ENCODE measurements at regions of chr5 and their contacts with region 1.

Region 1: GRCh38 chr5:91787718-91788117 is 404.6 kb upstream of the ARRDC3 start:
- DNase-seq: no peak
- H3K4me3 ChIP-seq: no peak overlapping the region
- H3K27ac ChIP-seq: no peak overlapping the region
- H3K4me1 ChIP-seq: no peaks in the 10 kb centered on the region
- H3K27me3 ChIP-seq: no peaks in the 10 kb centered on the region
- CTCF ChIP-seq: no peak
- EP300 ChIP-seq: no peak
- POLR2A ChIP-seq: no peak

Region 2: DNA sequence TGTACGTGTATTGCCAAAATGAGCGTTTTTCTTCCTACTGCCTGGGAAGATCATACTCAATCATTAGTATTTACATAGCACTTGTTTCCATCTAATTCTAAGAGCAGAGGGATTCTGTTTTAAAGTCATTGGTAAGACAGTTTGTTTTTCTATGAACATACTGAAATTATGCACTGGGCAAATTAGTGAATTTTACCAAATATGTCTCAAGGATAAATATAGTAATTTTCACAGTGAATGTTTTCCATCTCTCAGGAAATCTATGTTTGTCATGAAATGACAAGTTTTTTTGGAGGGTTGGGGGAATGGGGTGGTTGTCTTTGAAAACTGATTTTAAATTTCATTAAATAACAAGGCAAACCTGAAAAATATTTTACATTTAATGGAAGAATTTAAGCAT is 36.7 kb after region 1 on chr5:
- intact Hi-C with region 1: loop called in 1 of 4 experiments (anchors 1 kb)
- DNase-seq: no peak
- H3K4me3 ChIP-seq: no peak overlapping the region
- H3K27ac ChIP-seq: no peak overlapping the region
- H3K4me1 ChIP-seq: no peaks in the 10 kb centered on the region
- H3K27me3 ChIP-seq: no peaks in the 10 kb centered on the region
- CTCF ChIP-seq: no peak
- EP300 ChIP-seq: no peak
- POLR2A ChIP-seq: no peak

Region 3: DNA sequence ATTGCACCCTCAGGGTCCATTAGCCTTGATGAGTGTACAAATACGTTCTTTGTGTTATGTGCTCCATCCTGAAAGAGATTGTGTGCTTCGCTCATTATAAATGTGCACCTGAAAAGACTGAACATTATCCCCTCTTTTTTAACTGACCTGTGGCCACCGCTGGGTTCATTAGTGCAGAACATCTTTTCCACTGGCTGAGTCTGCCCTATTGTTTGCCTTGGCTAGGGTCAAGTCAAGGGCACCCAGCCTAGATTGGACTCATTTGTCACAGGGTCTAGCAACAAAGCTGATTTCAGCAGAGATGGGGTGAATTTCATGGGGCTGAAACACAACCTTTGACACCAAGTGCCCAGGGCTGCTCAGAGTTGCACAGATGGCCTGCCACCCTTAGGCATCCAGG is 359.5 kb after region 1 on chr5:
- intact Hi-C with region 1: no loop called
- DNase-seq: no peak
- H3K4me3 ChIP-seq: no peak overlapping the region
- H3K27ac ChIP-seq: no peak overlapping the region
- H3K4me1 ChIP-seq: no peaks in the 10 kb centered on the region
- H3K27me3 ChIP-seq: peaks cover 2% of the 10 kb centered on the region
- CTCF ChIP-seq: no peak
- EP300 ChIP-seq: no peak
- POLR2A ChIP-seq: no peak

Region 4: DNA sequence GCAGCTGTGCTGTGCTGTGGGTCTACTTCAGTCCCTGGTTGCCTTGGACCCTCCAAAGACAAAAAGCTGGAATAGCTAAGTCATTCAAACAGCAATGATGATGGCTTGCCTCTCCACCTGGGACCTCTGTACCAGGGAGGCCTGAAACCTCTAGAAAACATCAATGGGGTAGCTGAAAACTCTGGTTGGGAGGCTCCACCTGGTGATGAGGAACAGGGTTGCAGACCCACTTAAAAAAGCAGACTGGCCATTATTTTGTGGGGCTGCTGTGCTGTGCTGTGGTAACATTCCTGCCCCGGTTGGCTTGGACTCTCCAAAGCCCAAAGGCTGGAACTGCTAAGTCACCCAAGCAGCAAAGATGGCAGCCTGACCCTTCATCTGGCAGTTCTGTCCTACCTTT is 434.7 kb after region 1 on chr5:
- intact Hi-C with region 1: no loop called
- DNase-seq: no peak
- H3K4me3 ChIP-seq: no peak overlapping the region
- H3K27ac ChIP-seq: no peak overlapping the region
- H3K4me1 ChIP-seq: no peaks in the 10 kb centered on the region
- H3K27me3 ChIP-seq: no peaks in the 10 kb centered on the region
- CTCF ChIP-seq: no peak
- EP300 ChIP-seq: no peak
- POLR2A ChIP-seq: no peak